GM12878 (cell line): ENCODE measurements at regions of chr19 and their contacts with region 1.

Region 1: GRCh38 chr19:54851353-54851752 is 1.1 kb downstream of the KIR3DL2 start:
- DNase-seq: no peak
- ATAC-seq: no peak
- H3K4me3 ChIP-seq: no peak overlapping the region
- H3K27ac ChIP-seq: no peak overlapping the region
- H3K4me1 ChIP-seq: no peaks in the 10 kb centered on the region
- H3K27me3 ChIP-seq: no peaks in the 10 kb centered on the region; a peak in 2 of 4 replicates
- CTCF ChIP-seq: no peak
- EP300 ChIP-seq: no peak
- POLR2A ChIP-seq: no peak
- RAD21 ChIP-seq: no peak

Region 2: DNA sequence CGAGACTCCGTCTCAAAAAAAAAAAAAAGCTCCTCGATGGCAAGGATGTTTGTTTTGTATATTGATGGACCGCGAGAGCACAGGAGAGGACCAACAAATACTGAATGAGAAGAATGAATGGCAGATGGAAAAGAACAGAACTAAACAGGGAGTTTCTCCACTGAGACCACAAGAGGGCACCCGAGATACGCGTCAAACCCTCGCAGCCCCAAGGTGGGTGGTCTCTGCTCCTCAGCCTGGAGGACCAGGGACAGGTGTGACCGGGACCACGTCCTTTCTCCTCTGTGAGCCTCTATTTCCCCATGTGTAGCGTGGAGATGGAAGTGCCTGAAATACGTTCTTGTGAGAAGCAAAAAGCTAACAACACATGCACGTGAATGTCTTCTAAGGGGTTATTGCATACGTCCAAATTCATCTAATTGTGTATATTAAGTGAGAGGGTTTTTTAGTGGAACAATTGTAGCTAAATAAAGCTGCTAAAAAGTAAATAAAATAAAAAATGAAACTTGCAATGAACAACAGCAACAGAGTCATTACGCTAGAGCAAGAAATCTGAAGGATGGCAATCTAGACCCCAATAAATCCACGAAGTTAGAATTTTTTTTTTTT is 369.9 kb before region 1 on chr19:
- CTCF ChIA-PET with region 1: no interaction called
- POLR2A ChIA-PET with region 1: no interaction called
- RAD21 ChIA-PET with region 1: no interaction called
- SMC1A ChIA-PET with region 1: no interaction called
- in situ Hi-C with region 1: no loop called
- intact Hi-C with region 1: no loop called
- DNase-seq: no peak
- ATAC-seq: peak; percentile 69
- H3K4me3 ChIP-seq: no peak overlapping the region
- H3K27ac ChIP-seq: no peak overlapping the region
- H3K4me1 ChIP-seq: peaks cover 12% of the 10 kb centered on the region
- H3K27me3 ChIP-seq: no peaks in the 10 kb centered on the region; a peak in 1 of 4 replicates
- CTCF ChIP-seq: peak; percentile 61 to 74 (median 69)
- EP300 ChIP-seq: no peak
- POLR2A ChIP-seq: no peak
- RAD21 ChIP-seq: peak; percentile 83

Region 3: DNA sequence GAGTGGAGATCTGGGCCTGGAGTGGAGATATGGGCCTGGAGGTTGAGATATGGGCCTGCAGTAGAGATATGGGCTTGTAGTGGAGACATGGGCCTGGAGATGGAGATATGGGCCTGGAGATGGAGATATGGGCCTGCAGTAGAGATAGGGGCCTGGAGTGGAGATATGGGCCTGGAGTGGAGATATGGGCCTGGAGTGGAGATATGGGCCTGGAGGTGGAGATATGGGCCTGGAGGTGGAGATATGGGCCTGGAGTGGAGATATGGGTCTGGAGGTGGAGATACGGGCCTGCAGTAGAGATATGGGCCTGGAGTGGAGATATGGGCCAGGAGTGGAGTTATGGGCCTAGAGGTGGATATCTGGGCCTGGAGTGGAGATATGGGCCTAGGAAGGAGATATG is 112.6 kb before region 1 on chr19:
- CTCF ChIA-PET with region 1: no interaction called
- POLR2A ChIA-PET with region 1: no interaction called
- RAD21 ChIA-PET with region 1: no interaction called
- SMC1A ChIA-PET with region 1: no interaction called
- in situ Hi-C with region 1: loop called (anchors 5 kb)
- intact Hi-C with region 1: loop called (anchors 2 kb)
- DNase-seq: no peak
- ATAC-seq: no peak
- H3K4me3 ChIP-seq: no peak overlapping the region
- H3K27ac ChIP-seq: no peak overlapping the region
- H3K4me1 ChIP-seq: no peaks in the 10 kb centered on the region
- H3K27me3 ChIP-seq: no peaks in the 10 kb centered on the region
- CTCF ChIP-seq: no peak
- EP300 ChIP-seq: no peak
- POLR2A ChIP-seq: no peak
- RAD21 ChIP-seq: no peak

Region 4: GRCh38 chr19:54817670-54818536 is 33.5 kb before region 1 on chr19:
- CTCF ChIA-PET with region 1: no interaction called
- POLR2A ChIA-PET with region 1: no interaction called
- RAD21 ChIA-PET with region 1: no interaction called
- SMC1A ChIA-PET with region 1: no interaction called
- in situ Hi-C with region 1: loop called (anchors 5 kb)
- intact Hi-C with region 1: no loop called
- DNase-seq: no peak
- ATAC-seq: no peak
- H3K4me3 ChIP-seq: no peak overlapping the region
- H3K27ac ChIP-seq: no peak overlapping the region
- H3K4me1 ChIP-seq: no peaks in the 10 kb centered on the region
- H3K27me3 ChIP-seq: no peaks in the 10 kb centered on the region; a peak in 1 of 4 replicates
- CTCF ChIP-seq: no peak
- EP300 ChIP-seq: no peak
- POLR2A ChIP-seq: no peak
- RAD21 ChIP-seq: no peak